ENCODE measurements at regions of chr7 and their contacts with region 1.

Region 1: DNA sequence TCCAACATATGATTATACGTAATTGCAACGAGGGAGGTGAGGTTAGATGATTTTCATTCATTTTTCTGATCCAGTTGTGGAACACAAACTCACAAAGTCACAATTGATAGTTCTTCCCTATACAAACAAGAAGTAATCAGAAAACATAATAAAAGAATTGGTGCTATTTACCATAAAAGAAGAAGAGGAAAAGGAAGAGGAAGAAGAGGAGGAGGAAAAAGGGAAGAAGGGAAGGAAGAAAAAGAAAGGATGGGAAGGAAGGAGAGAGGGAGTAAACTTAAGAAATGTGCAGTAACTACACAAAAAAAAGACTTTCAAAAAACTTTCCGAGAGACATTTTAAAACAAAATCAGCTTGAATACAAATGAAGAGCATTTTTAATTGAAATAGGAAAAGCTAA is 65.0 kb downstream of the CCDC71L start:
- DNase-seq: no peak
- H3K4me3 ChIP-seq: no peak overlapping the region
- H3K27ac ChIP-seq: no peak overlapping the region
- H3K4me1 ChIP-seq: no peaks in the 10 kb centered on the region
- H3K27me3 ChIP-seq: no peaks in the 10 kb centered on the region
- CTCF ChIP-seq: no peak
- POLR2A ChIP-seq: no peak

Region 2: DNA sequence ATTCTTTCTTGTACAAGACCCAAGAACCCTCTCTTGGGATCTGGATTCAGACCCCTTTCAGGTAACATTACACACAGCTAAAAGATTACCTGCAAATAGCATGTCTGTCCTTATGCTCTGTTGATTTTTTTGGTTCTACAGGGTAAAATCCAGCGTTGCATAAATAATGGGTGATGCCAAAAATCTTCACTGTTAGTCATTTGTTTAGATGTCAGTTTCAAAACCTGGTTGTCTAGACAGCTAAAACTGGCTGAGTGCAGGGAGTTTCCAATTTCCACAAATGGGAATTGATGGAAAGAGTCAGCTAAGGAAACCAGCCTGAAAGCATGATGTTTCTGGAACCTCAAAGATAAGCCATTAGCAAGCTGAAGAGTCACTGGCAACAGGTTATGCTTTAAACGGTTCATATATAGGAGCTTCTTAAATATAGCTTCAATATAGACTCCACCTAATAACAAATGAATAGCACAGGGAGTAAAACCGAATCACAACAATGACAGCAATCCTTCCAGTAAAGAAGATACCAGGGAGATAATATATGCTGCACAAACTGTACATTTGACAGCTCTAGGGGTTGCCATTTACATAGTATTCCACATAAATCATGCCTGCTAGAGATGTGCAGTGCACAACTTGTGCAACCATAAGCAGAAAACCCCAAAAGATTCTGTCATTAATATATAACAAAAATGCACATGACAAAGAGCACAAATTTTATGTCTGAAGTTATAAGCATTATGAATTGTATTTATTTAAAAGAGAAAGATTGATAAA is 44.6 kb after region 1 on chr7:
- intact Hi-C with region 1: loop called (anchors 2 kb)
- DNase-seq: no peak
- H3K4me3 ChIP-seq: no peak overlapping the region
- H3K27ac ChIP-seq: no peak overlapping the region
- H3K4me1 ChIP-seq: no peaks in the 10 kb centered on the region
- H3K27me3 ChIP-seq: no peaks in the 10 kb centered on the region
- CTCF ChIP-seq: no peak
- POLR2A ChIP-seq: no peak

Region 3: GRCh38 chr7:106693677-106694353 is 97.9 kb after region 1 on chr7:
- intact Hi-C with region 1: no loop called
- DNase-seq: no peak
- H3K4me3 ChIP-seq: no peak overlapping the region
- H3K27ac ChIP-seq: no peak overlapping the region
- H3K4me1 ChIP-seq: no peaks in the 10 kb centered on the region
- H3K27me3 ChIP-seq: no peaks in the 10 kb centered on the region
- CTCF ChIP-seq: no peak
- POLR2A ChIP-seq: no peak